IMR-90 (cell line): ENCODE measurements at regions of chr3 and their contacts with region 1.

Region 1: GRCh38 chr3:132709761-132710160 is 12.4 kb downstream of the NPHP3 start:
- DNase-seq: no peak
- ATAC-seq: no peak
- H3K4me3 ChIP-seq: no peak overlapping the region
- H3K27ac ChIP-seq: no peak overlapping the region
- H3K4me1 ChIP-seq: no peaks in the 10 kb centered on the region; the same call in 1 of the 2 replicates
- H3K27me3 ChIP-seq: no peaks in the 10 kb centered on the region
- CTCF ChIP-seq: no peak
- POLR2A ChIP-seq: no peak
- RAD21 ChIP-seq: no peak

Region 2: GRCh38 chr3:132629928-132630327 is 79.8 kb before region 1 on chr3:
- CTCF ChIA-PET with region 1: no interaction called
- POLR2A ChIA-PET with region 1: no interaction called
- dilution Hi-C with region 1: no loop called
- in situ Hi-C with region 1: no loop called
- intact Hi-C with region 1: no loop called
- DNase-seq: peak; percentile 82
- ATAC-seq: peak; percentile 70
- H3K4me3 ChIP-seq: no peak overlapping the region
- H3K27ac ChIP-seq: no peak overlapping the region
- H3K4me1 ChIP-seq: 0 out of 2 replicates have a peak, but pooled peaks cover 3% of the 10 kb centered on the region
- H3K27me3 ChIP-seq: no peaks in the 10 kb centered on the region
- CTCF ChIP-seq: no peak
- POLR2A ChIP-seq: no peak
- RAD21 ChIP-seq: no peak

Region 3: DNA sequence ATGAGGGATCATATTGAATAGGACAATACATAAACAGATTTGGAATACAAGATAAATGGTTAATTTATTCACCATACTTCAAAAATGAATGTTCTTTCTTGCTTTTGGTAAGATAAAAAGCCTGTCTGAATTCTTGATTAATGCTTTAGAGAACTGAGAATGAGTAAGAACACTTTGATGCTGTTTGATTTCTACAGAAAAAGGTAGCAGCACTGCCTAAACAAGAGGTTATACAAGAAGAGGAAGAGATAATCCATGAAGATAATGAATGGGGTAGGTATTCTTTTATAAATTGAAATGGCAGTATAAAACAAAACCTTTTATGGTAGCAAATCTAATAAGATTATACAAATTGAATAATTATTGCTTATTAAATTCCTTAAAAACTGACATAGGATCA is 34.4 kb before region 1 on chr3:
- CTCF ChIA-PET with region 1: no interaction called
- POLR2A ChIA-PET with region 1: no interaction called
- dilution Hi-C with region 1: no loop called
- in situ Hi-C with region 1: no loop called
- intact Hi-C with region 1: loop called (anchors 5 kb)
- DNase-seq: no peak
- ATAC-seq: no peak
- H3K4me3 ChIP-seq: no peak overlapping the region
- H3K27ac ChIP-seq: no peak overlapping the region
- H3K4me1 ChIP-seq: no peaks in the 10 kb centered on the region
- H3K27me3 ChIP-seq: no peaks in the 10 kb centered on the region
- CTCF ChIP-seq: no peak
- POLR2A ChIP-seq: no peak
- RAD21 ChIP-seq: no peak